ENCODE measurements at regions of chr2 and their contacts with region 1.

Region 1: GRCh38 chr2:234494361-234495250 is 2.3 kb downstream of the ARL4C start:
- DNase-seq: no peak
- ATAC-seq: no peak
- H3K4me3 ChIP-seq: peak overlapping the region in 10 of 12 donors; percentile 31 to 89 (median 65)
- H3K27ac ChIP-seq: peak overlapping the region in 3 of 12 donors; percentile 11 to 86 (median 51)
- H3K4me1 ChIP-seq: peaks cover 7 to 34% (median 18%) of the 10 kb centered on the region in 12 donors
- H3K27me3 ChIP-seq: peaks cover 0 to 18% (median 8%) of the 10 kb centered on the region in 9 donors
- CTCF ChIP-seq: no peak
- POLR2A ChIP-seq: no peak

Region 2: DNA sequence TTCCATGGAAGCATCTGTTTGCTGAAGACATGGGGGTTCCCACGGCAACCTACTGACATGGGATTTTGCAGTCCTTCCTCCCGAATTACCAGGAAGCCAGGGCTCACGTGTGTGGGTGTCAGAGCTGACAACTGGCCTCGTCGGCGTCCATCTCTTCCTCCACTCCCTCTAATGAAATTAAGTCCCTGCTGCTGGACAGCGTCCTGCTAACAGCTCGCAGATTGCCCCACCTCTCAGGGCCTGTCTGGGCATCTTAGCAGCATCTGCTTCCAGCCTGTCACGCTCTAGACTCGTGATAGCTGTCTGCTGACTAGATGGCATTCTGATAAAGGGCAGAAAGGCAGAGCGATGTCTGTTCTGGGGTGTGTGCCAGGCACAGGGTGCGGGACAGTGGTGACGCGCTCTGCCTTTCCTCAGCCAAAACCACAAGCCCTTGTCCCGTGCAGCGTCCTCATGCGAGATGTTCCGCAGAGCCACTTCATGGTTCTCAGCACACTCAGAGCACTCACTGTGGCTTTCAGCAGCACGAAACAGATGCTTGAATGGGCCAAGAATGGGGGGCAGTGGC is 158.9 kb before region 1 on chr2:
- intact Hi-C with region 1: loop called in 2 of 10 experiments (anchors 5 to 10 kb)
- DNase-seq: peak; percentile 59 to 84 (median 72)
- ATAC-seq: peak; percentile 82 to 90 (median 85)
- H3K4me3 ChIP-seq: no peak overlapping the region
- H3K27ac ChIP-seq: peak overlapping the region in 4 of 12 donors; percentile 9 to 73 (median 36)
- H3K4me1 ChIP-seq: peaks cover 0 to 21% (median 3%) of the 10 kb centered on the region in 12 donors
- H3K27me3 ChIP-seq: no peaks in the 10 kb centered on the region
- CTCF ChIP-seq: no peak
- POLR2A ChIP-seq: no peak

Region 3: GRCh38 chr2:235416864-235417499 is 922.4 kb after region 1 on chr2:
- intact Hi-C with region 1: no loop called
- DNase-seq: no peak
- ATAC-seq: peak in 3 of 4 donors; percentile 18 to 34 (median 33)
- H3K4me3 ChIP-seq: no peak overlapping the region
- H3K27ac ChIP-seq: peak overlapping the region in 1 of 12 donors; percentile 45
- H3K4me1 ChIP-seq: peaks cover 0 to 31% (median 0%) of the 10 kb centered on the region in 12 donors
- H3K27me3 ChIP-seq: no peaks in the 10 kb centered on the region
- CTCF ChIP-seq: no peak
- POLR2A ChIP-seq: no peak